H1 (cell line): ENCODE measurements at regions of chr1 and their contacts with region 1.

Region 1: GRCh38 chr1:155323798-155324610 is 3.3 kb downstream of the RUSC1 start:
- DNase-seq: peak; percentile 77 to 93
- H3K4me3 ChIP-seq: peak overlapping the region; percentile 82 to 95 (median 90)
- H3K27ac ChIP-seq: peak overlapping the region; percentile 67; the same call in 1 of the 2 replicates
- H3K4me1 ChIP-seq: peaks cover 8 to 26% (median 14%) of the 10 kb centered on the region in 4 experiments; a peak in 6 of 7 replicates
- H3K27me3 ChIP-seq: peaks cover 0 to 5% (median 3%) of the 10 kb centered on the region in 4 experiments; a peak in 4 of 7 replicates
- CTCF ChIP-seq: no peak
- EP300 ChIP-seq: no peak
- POLR2A ChIP-seq: peak in 1 of 2 experiments; percentile 26; a peak in 2 of 3 replicates
- RAD21 ChIP-seq: no peak

Region 2: GRCh38 chr1:155208541-155209311 is 115.3 kb before region 1 on chr1 and contains the start of gene MTX1:
- CTCF ChIA-PET with region 1: interaction called, 4 read pairs
- POLR2A ChIA-PET with region 1: interaction called, 11 read pairs
- DNase-seq: peak in 1 of 2 experiments; percentile 90
- H3K4me3 ChIP-seq: peak within 1 kb of the TSS; percentile 86 to 95 (median 94)
- H3K27ac ChIP-seq: peak within 1 kb of the TSS; percentile 85
- H3K4me1 ChIP-seq: peaks cover 3 to 20% (median 12%) of the 10 kb centered on the region in 4 experiments
- H3K27me3 ChIP-seq: peaks cover 0 to 3% (median 0%) of the 10 kb centered on the region in 4 experiments; a peak in 2 of 7 replicates
- CTCF ChIP-seq: no peak
- EP300 ChIP-seq: peak in 1 of 2 experiments; percentile 86; a peak in 1 of 3 replicates
- POLR2A ChIP-seq: peak in 1 of 2 experiments; percentile 74; a peak in 2 of 3 replicates
- RAD21 ChIP-seq: no peak
- total RNA-seq, gene MTX1: 47.9 and 55.0 TPM in 2 replicates

Region 3: GRCh38 chr1:155261852-155262673 is 61.9 kb before region 1 on chr1 and contains the start of gene SCAMP3:
- CTCF ChIA-PET with region 1: interaction called, 227 read pairs
- POLR2A ChIA-PET with region 1: interaction called, 21 read pairs
- DNase-seq: peak; percentile 90 to 95
- H3K4me3 ChIP-seq: peak within 1 kb of the TSS; percentile 71 to 89 (median 76)
- H3K27ac ChIP-seq: peak within 1 kb of the TSS; percentile 27; the same call in 1 of the 2 replicates
- H3K4me1 ChIP-seq: peaks cover 0 to 8% (median 4%) of the 10 kb centered on the region in 4 experiments; a peak in 3 of 7 replicates
- H3K27me3 ChIP-seq: no peaks in the 10 kb centered on the region
- CTCF ChIP-seq: no peak
- EP300 ChIP-seq: no peak
- POLR2A ChIP-seq: peak; percentile 59 to 94
- RAD21 ChIP-seq: no peak
- total RNA-seq, gene SCAMP3: 48.9 and 50.0 TPM in 2 replicates

Region 4: GRCh38 chr1:155277070-155277895 is 46.7 kb before region 1 on chr1 and contains the start of gene HCN3:
- CTCF ChIA-PET with region 1: interaction called, 50 read pairs
- POLR2A ChIA-PET with region 1: interaction called, 16 read pairs
- DNase-seq: peak; percentile 95 to 100
- H3K4me3 ChIP-seq: peak within 1 kb of the TSS; percentile 60 to 82 (median 76)
- H3K27ac ChIP-seq: no peak within 1 kb of the TSS
- H3K4me1 ChIP-seq: peaks cover 9 to 17% (median 13%) of the 10 kb centered on the region in 4 experiments
- H3K27me3 ChIP-seq: peaks cover 0 to 3% (median 0%) of the 10 kb centered on the region in 4 experiments; a peak in 2 of 7 replicates
- CTCF ChIP-seq: peak; percentile 42 to 52 (median 51)
- EP300 ChIP-seq: no peak
- POLR2A ChIP-seq: no peak
- RAD21 ChIP-seq: peak in 1 of 2 experiments; percentile 30; a peak in 2 of 4 replicates
- total RNA-seq, gene HCN3: 5.5 and 6.4 TPM in 2 replicates

Region 5: GRCh38 chr1:155308493-155309422 is 15.2 kb before region 1 on chr1 and contains the start of gene FDPS:
- CTCF ChIA-PET with region 1: interaction called, 33 read pairs
- POLR2A ChIA-PET with region 1: interaction called, 14 read pairs
- DNase-seq: peak; percentile 89 to 97
- H3K4me3 ChIP-seq: peak within 1 kb of the TSS; percentile 79 to 100 (median 89)
- H3K27ac ChIP-seq: peak within 1 kb of the TSS; percentile 65
- H3K4me1 ChIP-seq: peaks cover 0 to 8% (median 4%) of the 10 kb centered on the region in 4 experiments; a peak in 6 of 7 replicates
- H3K27me3 ChIP-seq: no peaks in the 10 kb centered on the region; a peak in 1 of 7 replicates
- CTCF ChIP-seq: 0 out of 4 replicates have a peak, but pooled peaks of 1 of the 3 experiments have one; percentile 7
- EP300 ChIP-seq: no peak
- POLR2A ChIP-seq: peak; percentile 85 to 91
- RAD21 ChIP-seq: 0 out of 4 replicates have a peak, but pooled peaks of 1 of the 2 experiments have one; percentile 6
- total RNA-seq, gene FDPS: 368 and 370 TPM in 2 replicates

Region 6: DNA sequence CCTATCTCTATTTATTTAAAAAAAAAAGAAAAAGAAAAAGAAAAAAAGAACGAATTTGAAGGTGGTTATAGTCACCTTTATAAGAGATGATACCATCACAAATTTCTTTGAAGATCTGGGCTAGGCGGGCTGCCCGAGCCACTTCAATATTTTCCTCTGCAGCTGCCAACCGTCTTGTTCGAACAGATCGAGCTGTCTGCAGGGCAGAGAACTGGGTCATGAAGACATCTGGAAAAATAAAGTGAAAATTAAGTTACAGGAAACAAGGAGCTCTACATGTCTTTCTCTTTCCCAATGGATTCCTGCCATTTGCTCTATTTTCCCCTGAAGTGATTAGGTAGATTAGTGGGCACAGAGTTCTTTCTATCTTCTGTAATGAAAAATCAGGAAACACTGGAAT is 28.6 kb after region 1 on chr1:
- CTCF ChIA-PET with region 1: no interaction called
- POLR2A ChIA-PET with region 1: no interaction called
- DNase-seq: no peak
- H3K4me3 ChIP-seq: no peak overlapping the region
- H3K27ac ChIP-seq: no peak overlapping the region
- H3K4me1 ChIP-seq: no peaks in the 10 kb centered on the region
- H3K27me3 ChIP-seq: no peaks in the 10 kb centered on the region
- CTCF ChIP-seq: no peak
- EP300 ChIP-seq: no peak
- POLR2A ChIP-seq: no peak
- RAD21 ChIP-seq: no peak